MCF 10A (cell line): ENCODE measurements at regions of chr4 and their contacts with region 1.

Region 1: GRCh38 chr4:55546756-55547465 is at the start of gene CLOCK:
- DNase-seq: peak; percentile 85
- H3K4me3 Mint-ChIP-seq: peak within 1 kb of the TSS; percentile 87
- H3K27ac Mint-ChIP-seq: peak within 1 kb of the TSS; percentile 49
- H3K4me1 Mint-ChIP-seq: peaks cover 53% of the 10 kb centered on the region
- H3K27me3 Mint-ChIP-seq: no peaks in the 10 kb centered on the region
- CTCF ChIP-seq: peak; percentile 29
- total RNA-seq, gene CLOCK: 37.6 and 44.0 TPM in 2 replicates

Region 2: GRCh38 chr4:55372259-55372658 is 174.7 kb before region 1 on chr4:
- CTCF ChIA-PET with region 1: no interaction called
- POLR2A ChIA-PET with region 1: no interaction called
- intact Hi-C with region 1: no loop called
- DNase-seq: no peak
- H3K4me3 Mint-ChIP-seq: no peak overlapping the region
- H3K27ac Mint-ChIP-seq: no peak overlapping the region
- H3K4me1 Mint-ChIP-seq: no peaks in the 10 kb centered on the region
- H3K27me3 Mint-ChIP-seq: no peaks in the 10 kb centered on the region
- CTCF ChIP-seq: no peak

Region 3: DNA sequence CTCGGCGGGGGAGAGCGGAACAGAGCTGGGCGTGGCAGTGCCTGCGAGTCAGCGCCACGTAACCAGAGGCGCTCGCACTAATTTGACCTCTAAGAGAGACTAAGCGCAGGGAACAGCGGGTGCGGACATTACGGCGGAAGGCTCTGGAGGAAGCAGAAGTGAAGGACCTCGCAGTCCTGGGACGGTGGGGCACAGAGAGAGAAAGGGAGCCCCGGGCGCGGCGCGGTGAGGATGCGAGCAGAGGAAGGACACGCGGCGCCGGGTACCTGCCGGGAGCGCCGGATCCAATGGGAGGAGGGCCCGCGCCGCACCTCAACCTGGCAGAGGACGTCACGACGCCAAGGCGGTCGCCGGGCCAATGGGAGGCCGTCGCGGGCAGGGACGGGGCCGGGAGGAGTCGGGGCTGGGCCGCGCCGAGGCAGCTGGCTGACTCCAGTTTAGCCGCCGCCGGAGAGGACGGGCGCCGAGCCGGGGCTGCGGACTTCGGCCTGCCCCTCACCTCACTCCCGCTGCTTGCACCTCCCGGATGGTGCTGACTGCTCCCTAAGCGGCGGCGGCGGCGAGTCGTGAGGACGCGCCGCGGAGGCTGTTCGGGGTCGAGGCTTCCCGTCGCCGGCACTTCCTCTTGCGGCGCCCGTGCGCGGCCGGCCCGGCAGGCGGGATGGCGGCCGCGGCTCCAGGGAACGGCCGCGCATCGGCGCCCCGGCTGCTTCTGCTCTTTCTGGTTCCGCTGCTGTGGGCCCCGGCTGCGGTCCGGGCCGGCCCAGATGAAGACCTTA is 151.2 kb before region 1 on chr4 and contains the start of gene TMEM165:
- CTCF ChIA-PET with region 1: interaction called, 3 read pairs
- POLR2A ChIA-PET with region 1: interaction called, 28 read pairs
- intact Hi-C with region 1: loop called (anchors 5 kb)
- DNase-seq: peak; percentile 93
- H3K4me3 Mint-ChIP-seq: peak within 1 kb of the TSS; percentile 93
- H3K27ac Mint-ChIP-seq: peak within 1 kb of the TSS; percentile 98
- H3K4me1 Mint-ChIP-seq: peaks cover 22% of the 10 kb centered on the region
- H3K27me3 Mint-ChIP-seq: no peaks in the 10 kb centered on the region
- CTCF ChIP-seq: no peak
- total RNA-seq, gene TMEM165: 110 and 119 TPM in 2 replicates

Region 4: GRCh38 chr4:55475394-55476243 is 71.3 kb before region 1 on chr4:
- CTCF ChIA-PET with region 1: interaction called, 4 read pairs
- POLR2A ChIA-PET with region 1: interaction called, 16 read pairs
- intact Hi-C with region 1: no loop called
- DNase-seq: peak; percentile 58
- H3K4me3 Mint-ChIP-seq: no peak overlapping the region
- H3K27ac Mint-ChIP-seq: peak overlapping the region; percentile 72
- H3K4me1 Mint-ChIP-seq: peaks cover 23% of the 10 kb centered on the region
- H3K27me3 Mint-ChIP-seq: no peaks in the 10 kb centered on the region
- CTCF ChIP-seq: no peak

Region 5: GRCh38 chr4:55534306-55534705 is 12.6 kb before region 1 on chr4:
- CTCF ChIA-PET with region 1: interaction called, 4 read pairs
- POLR2A ChIA-PET with region 1: interaction called, 12 read pairs
- intact Hi-C with region 1: no loop called
- DNase-seq: no peak
- H3K4me3 Mint-ChIP-seq: no peak overlapping the region
- H3K27ac Mint-ChIP-seq: no peak overlapping the region
- H3K4me1 Mint-ChIP-seq: no peaks in the 10 kb centered on the region
- H3K27me3 Mint-ChIP-seq: no peaks in the 10 kb centered on the region
- CTCF ChIP-seq: no peak

Region 6: DNA sequence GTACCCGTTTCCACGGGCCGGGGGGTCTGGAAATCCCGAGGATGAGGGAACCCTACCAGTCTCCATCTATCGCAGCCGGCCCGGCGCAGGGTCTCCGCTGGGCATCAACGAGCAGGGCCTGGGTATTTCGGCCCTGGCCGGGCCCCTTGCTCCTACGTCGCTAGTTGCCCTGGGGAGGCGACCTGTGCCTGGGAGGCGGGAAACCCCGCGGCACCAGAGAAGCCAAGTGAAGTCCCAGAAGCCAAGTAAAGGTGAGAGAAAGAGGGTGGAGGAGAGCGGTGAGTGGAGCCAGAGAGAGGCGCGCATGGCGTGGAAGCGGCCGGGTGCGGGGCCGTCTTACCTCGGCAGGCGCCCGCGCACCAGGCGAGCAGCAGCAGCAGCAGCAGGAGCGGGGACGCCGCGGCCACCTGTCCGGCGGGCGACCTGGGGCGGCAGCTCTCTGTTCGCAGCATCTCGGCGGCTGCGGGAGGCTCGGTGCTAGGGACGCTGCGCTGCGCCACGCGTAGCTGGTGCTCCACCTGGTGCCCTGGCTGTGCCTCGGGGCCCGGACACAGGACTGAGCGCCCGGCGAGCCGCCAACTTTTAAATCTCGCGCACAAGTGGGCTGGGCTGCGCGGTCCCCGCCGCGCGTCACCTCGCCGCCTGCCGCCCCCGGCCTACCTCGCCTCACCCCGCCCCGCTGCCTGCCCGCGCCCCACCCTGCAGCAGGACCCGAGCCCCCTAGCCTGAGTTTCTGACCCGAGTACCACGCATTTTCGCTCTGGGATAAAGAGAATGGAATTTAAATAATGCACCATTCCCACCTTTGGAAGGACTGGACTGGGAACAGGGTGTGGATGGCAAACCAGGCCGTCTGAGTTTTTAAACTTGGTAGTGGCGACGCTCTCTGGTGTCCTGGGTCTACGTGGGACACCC is 89.1 kb after region 1 on chr4 and contains the start of gene NMU:
- CTCF ChIA-PET with region 1: interaction called, 7 read pairs
- POLR2A ChIA-PET with region 1: interaction called, 4 read pairs
- intact Hi-C with region 1: loop called (anchors 2 kb)
- DNase-seq: peak; percentile 82
- H3K4me3 Mint-ChIP-seq: peak within 1 kb of the TSS; percentile 71
- H3K27ac Mint-ChIP-seq: no peak within 1 kb of the TSS
- H3K4me1 Mint-ChIP-seq: peaks cover 23% of the 10 kb centered on the region
- H3K27me3 Mint-ChIP-seq: no peaks in the 10 kb centered on the region
- CTCF ChIP-seq: peak; percentile 17
- total RNA-seq, gene NMU: 4.7 and 8.5 TPM in 2 replicates